Heart left ventricle (tissue), 16 donors: ENCODE measurements at regions of chr11 and their contacts with region 1.

Region 1: DNA sequence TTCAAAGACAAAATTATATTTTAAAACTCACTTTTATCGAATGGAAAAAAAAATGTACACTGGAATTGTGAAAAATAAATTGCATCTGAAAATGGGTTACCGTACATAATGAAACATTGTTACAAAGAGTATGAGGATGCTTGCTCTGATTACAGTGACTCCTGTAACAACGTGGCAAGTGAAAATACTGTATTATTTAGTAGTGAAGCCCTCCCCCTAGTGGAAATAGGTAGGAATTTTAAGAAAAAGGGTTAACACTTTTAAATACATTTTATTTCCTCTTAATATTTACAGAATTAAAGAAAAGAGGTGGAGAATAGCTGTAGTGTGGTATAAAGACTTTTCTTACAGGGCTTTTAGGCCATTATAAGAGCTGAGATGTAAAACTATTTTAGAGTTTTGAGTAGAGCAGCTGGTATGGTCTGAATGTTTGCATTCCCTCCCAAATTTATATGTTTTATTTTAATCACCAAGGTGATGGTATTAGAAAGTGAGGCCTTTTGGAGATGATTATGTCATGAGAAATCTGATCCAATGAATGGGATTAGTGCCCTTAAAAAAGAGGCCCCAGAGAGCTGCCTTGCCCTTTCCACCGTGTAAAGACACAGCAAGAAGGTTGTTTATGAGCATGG is 25.2 kb downstream of the FAM76B start:
- DNase-seq: no peak
- ATAC-seq: peak in 3 of 4 donors; percentile 61 to 69 (median 62)
- H3K4me3 ChIP-seq: no peak overlapping the region
- H3K27ac ChIP-seq: no peak overlapping the region
- H3K4me1 ChIP-seq: peaks cover 0 to 16% (median 0%) of the 10 kb centered on the region in 12 donors
- H3K27me3 ChIP-seq: no peaks in the 10 kb centered on the region
- CTCF ChIP-seq: peak; percentile 56 to 85 (median 71)
- POLR2A ChIP-seq: no peak

Region 2: GRCh38 chr11:94973099-94973968 is 791.0 kb before region 1 on chr11 and contains the starts of genes CWC15 and KDM4D:
- intact Hi-C with region 1: loop called in 2 of 10 experiments (anchors 10 kb)
- DNase-seq: peak; percentile 96
- ATAC-seq: peak; percentile 99 to 100 (median 100)
- H3K4me3 ChIP-seq: peak within 1 kb of the TSS; percentile 71 to 93 (median 87)
- H3K27ac ChIP-seq: peak within 1 kb of the TSS in 11 of 12 donors; percentile 57 to 89 (median 80)
- H3K4me1 ChIP-seq: peaks cover 4 to 19% (median 12%) of the 10 kb centered on the region in 12 donors
- H3K27me3 ChIP-seq: no peaks in the 10 kb centered on the region
- CTCF ChIP-seq: peak in 1 of 12 donors; percentile 15
- POLR2A ChIP-seq: no peak
- total RNA-seq, gene CWC15: 54.4 to 81.8 (median 62.6) TPM
- total RNA-seq, gene KDM4D: 0.65 to 1.3 (median 0.95) TPM in 8 of 9 donors, not detected in the other

Region 3: DNA sequence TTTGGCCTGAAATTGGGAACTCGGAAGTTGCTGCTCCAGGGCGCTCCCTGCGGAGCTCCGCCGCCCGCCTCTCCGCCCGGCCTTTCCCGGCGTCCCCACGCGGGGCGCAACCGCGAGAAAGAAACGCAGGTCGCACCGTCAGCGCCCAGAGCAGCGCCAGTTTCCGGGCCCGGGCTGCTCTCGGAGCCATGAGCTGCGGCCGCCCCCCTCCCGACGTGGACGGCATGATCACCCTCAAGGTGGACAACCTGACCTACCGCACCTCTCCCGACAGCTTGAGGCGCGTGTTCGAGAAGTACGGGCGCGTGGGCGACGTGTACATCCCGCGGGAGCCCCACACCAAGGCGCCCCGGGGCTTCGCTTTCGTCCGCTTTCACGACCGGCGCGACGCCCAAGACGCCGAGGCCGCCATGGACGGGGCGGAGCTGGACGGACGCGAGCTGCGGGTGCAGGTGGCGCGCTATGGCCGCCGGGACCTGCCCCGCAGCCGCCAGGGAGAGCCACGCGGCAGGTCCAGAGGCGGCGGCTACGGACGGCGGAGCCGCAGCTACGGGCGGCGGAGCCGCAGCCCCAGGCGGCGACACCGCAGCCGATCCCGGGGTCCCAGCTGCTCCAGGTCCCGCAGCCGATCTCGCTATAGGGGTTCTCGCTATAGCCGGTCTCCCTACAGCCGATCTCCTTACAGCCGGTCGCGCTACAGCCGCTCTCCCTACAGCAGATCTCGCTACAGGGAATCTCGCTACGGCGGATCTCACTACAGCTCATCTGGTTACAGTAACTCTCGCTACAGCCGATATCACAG is 697.1 kb before region 1 on chr11:
- intact Hi-C with region 1: loop called in 7 of 10 experiments (anchors 5 to 10 kb)
- DNase-seq: peak; percentile 85 to 93 (median 89)
- ATAC-seq: peak; percentile 65 to 91 (median 86)
- H3K4me3 ChIP-seq: peak overlapping the region; percentile 62 to 92 (median 78)
- H3K27ac ChIP-seq: peak overlapping the region; percentile 93 to 99 (median 96)
- H3K4me1 ChIP-seq: peaks cover 3 to 24% (median 13%) of the 10 kb centered on the region in 12 donors
- H3K27me3 ChIP-seq: no peaks in the 10 kb centered on the region
- CTCF ChIP-seq: peak; percentile 35 to 83 (median 62)
- POLR2A ChIP-seq: peak in 1 of 2 donors; percentile 49

Region 4: GRCh38 chr11:95076416-95076815 is 688.0 kb before region 1 on chr11:
- intact Hi-C with region 1: loop called in 3 of 10 experiments (anchors 5 to 10 kb)
- DNase-seq: no peak
- ATAC-seq: no peak
- H3K4me3 ChIP-seq: no peak overlapping the region
- H3K27ac ChIP-seq: peak overlapping the region in 1 of 12 donors; percentile 11
- H3K4me1 ChIP-seq: peaks cover 0 to 40% (median 13%) of the 10 kb centered on the region in 12 donors
- H3K27me3 ChIP-seq: no peaks in the 10 kb centered on the region
- CTCF ChIP-seq: no peak
- POLR2A ChIP-seq: no peak

Region 5: GRCh38 chr11:95089620-95090542 is 674.5 kb before region 1 on chr11 and contains the start of gene ENDOD1:
- intact Hi-C with region 1: loop called in 1 of 10 experiments (anchors 10 kb)
- DNase-seq: peak; percentile 88 to 94 (median 88)
- ATAC-seq: peak; percentile 94 to 99 (median 97)
- H3K4me3 ChIP-seq: peak within 1 kb of the TSS; percentile 77 to 96 (median 92)
- H3K27ac ChIP-seq: peak within 1 kb of the TSS; percentile 63 to 98 (median 93)
- H3K4me1 ChIP-seq: peaks cover 0 to 40% (median 22%) of the 10 kb centered on the region in 12 donors
- H3K27me3 ChIP-seq: no peaks in the 10 kb centered on the region
- CTCF ChIP-seq: peak in 3 of 12 donors; percentile 10 to 29 (median 10)
- POLR2A ChIP-seq: peak in 1 of 2 donors; percentile 73
- total RNA-seq, gene ENDOD1: 9.7 to 28.5 (median 12.9) TPM

Region 6: DNA sequence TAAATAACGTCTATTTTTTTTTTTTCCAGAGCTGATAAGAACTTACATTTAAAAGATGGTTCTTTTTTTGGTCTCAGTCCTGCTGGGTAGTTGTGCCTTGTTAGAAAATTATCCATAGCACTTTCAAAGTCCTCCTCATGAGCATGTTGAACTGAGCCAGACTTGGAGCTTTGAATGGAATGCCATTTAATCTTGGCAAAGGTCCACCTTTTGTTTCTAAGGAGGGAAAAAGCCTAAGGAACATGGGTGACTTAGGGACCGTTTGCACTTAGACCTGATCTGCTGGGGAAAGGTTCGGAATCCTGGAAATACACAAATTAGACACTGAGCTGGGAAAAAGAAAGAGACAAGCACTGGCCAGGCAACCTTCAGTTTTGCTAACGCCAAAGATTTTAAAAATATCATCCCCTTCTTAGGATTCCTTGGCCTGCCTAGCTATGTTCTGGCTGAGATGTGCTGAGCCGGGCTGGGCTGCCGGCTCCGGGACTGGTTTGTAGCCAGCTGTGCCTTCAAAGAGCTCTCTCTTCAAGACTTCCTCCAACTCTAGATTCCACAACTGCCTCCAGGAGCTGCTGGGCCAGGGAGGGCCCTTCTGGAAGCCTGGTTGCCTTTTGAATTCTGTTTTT is 607.4 kb before region 1 on chr11:
- intact Hi-C with region 1: loop called in 4 of 10 experiments (anchors 2 to 5 kb)
- DNase-seq: peak in 4 of 5 donors; percentile 26 to 48 (median 33)
- ATAC-seq: peak; percentile 30 to 80 (median 74)
- H3K4me3 ChIP-seq: no peak overlapping the region
- H3K27ac ChIP-seq: peak overlapping the region in 9 of 12 donors; percentile 6 to 69 (median 33)
- H3K4me1 ChIP-seq: peaks cover 0 to 37% (median 10%) of the 10 kb centered on the region in 12 donors
- H3K27me3 ChIP-seq: no peaks in the 10 kb centered on the region
- CTCF ChIP-seq: no peak
- POLR2A ChIP-seq: no peak

Region 7: DNA sequence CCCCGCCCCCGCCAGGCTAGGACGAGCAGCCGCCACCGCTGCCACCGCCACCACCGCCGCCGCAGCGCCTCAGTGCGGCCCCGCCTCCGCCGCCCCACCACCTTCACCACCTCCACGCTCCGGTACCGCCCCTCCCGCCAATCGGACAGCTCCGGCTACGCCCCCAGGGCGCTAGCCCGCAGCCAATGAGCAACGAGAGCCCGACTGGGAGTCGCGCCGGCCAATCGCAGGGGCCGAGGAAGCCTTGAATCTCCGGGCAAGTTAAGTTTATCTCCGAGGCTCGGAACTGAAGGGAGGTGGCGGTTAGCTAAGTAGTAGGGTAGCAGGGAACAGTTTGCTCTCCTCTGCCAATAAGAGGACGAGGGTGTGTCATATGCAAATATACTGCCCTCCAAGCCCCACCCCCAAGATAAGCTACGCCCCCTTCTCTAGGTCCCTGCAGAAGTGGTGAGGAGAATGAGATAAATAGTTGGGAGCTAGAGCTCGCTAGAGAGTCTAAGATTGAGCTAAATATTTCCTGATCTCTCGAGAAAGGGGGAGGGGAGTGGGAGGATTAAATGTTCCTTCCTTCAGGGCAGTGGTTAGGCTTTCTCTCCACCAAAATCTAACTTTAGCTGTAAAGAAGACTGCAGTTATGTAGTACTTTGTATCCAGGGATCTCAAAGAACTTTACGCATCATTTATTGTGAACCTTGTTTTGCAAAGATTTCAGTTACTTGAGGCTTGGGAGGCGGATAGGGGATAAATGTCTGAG is 533.1 kb before region 1 on chr11 and contains the start of gene SESN3:
- intact Hi-C with region 1: loop called in 1 of 10 experiments (anchors 10 kb)
- DNase-seq: peak; percentile 99
- ATAC-seq: peak; percentile 98 to 99 (median 98)
- H3K4me3 ChIP-seq: peak within 1 kb of the TSS; percentile 78 to 95 (median 88)
- H3K27ac ChIP-seq: peak within 1 kb of the TSS; percentile 36 to 90 (median 81)
- H3K4me1 ChIP-seq: peaks cover 0 to 48% (median 9%) of the 10 kb centered on the region in 12 donors
- H3K27me3 ChIP-seq: no peaks in the 10 kb centered on the region
- CTCF ChIP-seq: peak in 5 of 12 donors; percentile 15 to 43 (median 39)
- POLR2A ChIP-seq: peak in 1 of 2 donors; percentile 78
- total RNA-seq, gene SESN3: 3.1 to 26.5 (median 5.8) TPM